Right ventricle myocardium superior (tissue), 1 donor: ENCODE measurements at regions of chr11 and their contacts with region 1.

Region 1: GRCh38 chr11:89405629-89406028 is 85.5 kb downstream of the NOX4 start:
- DNase-seq: no peak
- ATAC-seq: peak; percentile 49

Region 2: DNA sequence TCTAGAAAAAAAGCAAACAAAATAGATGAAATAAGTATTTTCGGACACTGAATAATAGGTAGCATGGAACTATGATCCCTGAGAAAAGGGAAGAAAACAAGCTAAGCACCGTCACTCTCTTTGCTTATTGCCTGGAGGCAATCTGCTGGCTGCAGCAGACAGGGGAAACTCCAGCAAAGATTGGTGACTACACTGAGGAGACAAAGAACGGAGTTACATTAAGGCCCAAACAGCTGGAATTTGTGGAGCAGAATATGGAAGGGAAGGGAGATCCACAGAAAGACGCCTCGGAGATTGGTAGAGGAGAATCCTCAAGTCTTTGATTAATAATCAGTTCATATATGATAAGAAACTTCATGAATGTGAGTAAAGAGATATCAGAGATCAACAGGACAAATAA is 77.7 kb before region 1 on chr11:
- intact Hi-C with region 1: loop called (anchors 10 kb)
- DNase-seq: no peak
- ATAC-seq: no peak